CD8-positive, alpha-beta T cell (primary cell): ENCODE measurements at regions of chr3 and their contacts with region 1.

Region 1: DNA sequence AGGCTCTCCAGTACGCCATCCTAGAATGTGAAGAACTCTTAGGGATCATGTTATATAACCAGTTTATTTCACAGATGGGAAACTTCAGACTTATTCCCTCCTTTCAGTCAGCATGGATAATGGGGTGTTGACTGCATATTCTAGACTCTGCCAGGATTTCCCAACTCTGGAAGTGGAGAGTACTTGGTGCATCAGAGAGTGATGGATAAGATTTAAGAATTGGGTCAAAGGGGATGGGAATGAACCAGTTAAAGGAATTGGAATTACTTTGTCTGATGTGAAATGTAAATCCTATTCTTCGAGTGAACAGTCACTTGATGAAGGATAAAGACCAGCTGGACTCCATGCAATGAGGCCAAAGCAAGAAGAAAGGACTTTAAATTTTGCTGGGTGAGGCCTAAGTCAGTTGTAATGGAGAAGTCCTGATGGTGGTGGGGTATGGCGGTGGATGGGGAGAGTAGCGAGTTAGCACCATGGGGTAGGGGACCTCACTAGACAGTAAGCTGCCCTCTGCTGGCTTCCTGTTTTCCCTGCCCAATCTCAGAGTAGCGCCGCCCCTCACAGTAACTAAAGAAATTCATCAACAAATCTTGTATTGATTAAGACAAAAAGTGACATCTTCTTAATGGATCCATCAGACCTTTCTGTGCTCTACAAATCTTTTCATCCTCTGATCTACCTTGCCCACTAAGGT is 7.3 kb upstream of the CACNA1D start:
- DNase-seq: no peak
- ATAC-seq: no peak
- H3K4me3 ChIP-seq: no peak overlapping the region
- H3K4me3 Mint-ChIP-seq: no peak overlapping the region
- H3K27ac ChIP-seq: no peak overlapping the region
- H3K27ac Mint-ChIP-seq: no peak overlapping the region
- H3K4me1 ChIP-seq: no peaks in the 10 kb centered on the region
- H3K4me1 Mint-ChIP-seq: peaks cover 3% of the 10 kb centered on the region
- H3K27me3 ChIP-seq: no peaks in the 10 kb centered on the region
- H3K27me3 Mint-ChIP-seq: peaks cover 21% of the 10 kb centered on the region
- CTCF ChIP-seq: no peak

Region 2: GRCh38 chr3:53073553-53074365 is 413.3 kb before region 1 on chr3:
- CTCF ChIA-PET with region 1: no interaction called
- POLR2A ChIA-PET with region 1: no interaction called
- intact Hi-C with region 1: no loop called
- DNase-seq: no peak
- ATAC-seq: no peak
- H3K4me3 ChIP-seq: peak overlapping the region; percentile 72 to 86
- H3K4me3 Mint-ChIP-seq: peak overlapping the region; percentile 89
- H3K27ac ChIP-seq: peak overlapping the region; percentile 65 to 79
- H3K27ac Mint-ChIP-seq: peak overlapping the region; percentile 95
- H3K4me1 ChIP-seq: peaks cover 16% of the 10 kb centered on the region
- H3K4me1 Mint-ChIP-seq: peaks cover 17% of the 10 kb centered on the region
- H3K27me3 ChIP-seq: no peaks in the 10 kb centered on the region
- H3K27me3 Mint-ChIP-seq: no peaks in the 10 kb centered on the region
- CTCF ChIP-seq: no peak

Region 3: GRCh38 chr3:53236112-53236841 is 250.8 kb before region 1 on chr3:
- CTCF ChIA-PET with region 1: no interaction called
- POLR2A ChIA-PET with region 1: no interaction called
- intact Hi-C with region 1: no loop called
- DNase-seq: no peak
- ATAC-seq: no peak
- H3K4me3 ChIP-seq: no peak overlapping the region
- H3K4me3 Mint-ChIP-seq: no peak overlapping the region
- H3K27ac ChIP-seq: no peak overlapping the region
- H3K27ac Mint-ChIP-seq: no peak overlapping the region
- H3K4me1 ChIP-seq: no peaks in the 10 kb centered on the region
- H3K4me1 Mint-ChIP-seq: peaks cover 3% of the 10 kb centered on the region
- H3K27me3 ChIP-seq: no peaks in the 10 kb centered on the region
- H3K27me3 Mint-ChIP-seq: no peaks in the 10 kb centered on the region
- CTCF ChIP-seq: no peak

Region 4: GRCh38 chr3:53293867-53294266 is 193.2 kb before region 1 on chr3:
- CTCF ChIA-PET with region 1: no interaction called
- POLR2A ChIA-PET with region 1: no interaction called
- intact Hi-C with region 1: loop called in 1 of 2 experiments (anchors 10 kb)
- DNase-seq: no peak
- ATAC-seq: no peak
- H3K4me3 ChIP-seq: no peak overlapping the region
- H3K4me3 Mint-ChIP-seq: no peak overlapping the region
- H3K27ac ChIP-seq: no peak overlapping the region
- H3K27ac Mint-ChIP-seq: no peak overlapping the region
- H3K4me1 ChIP-seq: no peaks in the 10 kb centered on the region
- H3K4me1 Mint-ChIP-seq: no peaks in the 10 kb centered on the region
- H3K27me3 ChIP-seq: no peaks in the 10 kb centered on the region
- H3K27me3 Mint-ChIP-seq: no peaks in the 10 kb centered on the region
- CTCF ChIP-seq: no peak